Esophagus squamous epithelium (tissue), 5 donors: ENCODE measurements at regions of chr4 and their contacts with region 1.

Region 1: GRCh38 chr4:98995183-98996055 is at the start of gene METAP1:
- DNase-seq: peak; percentile 91
- H3K4me3 ChIP-seq: peak within 1 kb of the TSS; percentile 90 to 98 (median 98)
- H3K27ac ChIP-seq: peak within 1 kb of the TSS; percentile 93 to 99 (median 96)
- H3K4me1 ChIP-seq: peaks cover 6 to 49% (median 15%) of the 10 kb centered on the region in 3 donors
- H3K27me3 ChIP-seq: no peaks in the 10 kb centered on the region
- CTCF ChIP-seq: peak; percentile 52 to 88 (median 82)
- POLR2A ChIP-seq: peak in 2 of 4 donors; percentile 23 to 77
- total RNA-seq, gene METAP1: 48.5 to 81.6 (median 72.1) TPM

Region 2: GRCh38 chr4:98873059-98873458 is 122.4 kb before region 1 on chr4:
- intact Hi-C with region 1: no loop called
- DNase-seq: no peak
- H3K4me3 ChIP-seq: no peak overlapping the region
- H3K27ac ChIP-seq: no peak overlapping the region
- H3K4me1 ChIP-seq: no peaks in the 10 kb centered on the region
- H3K27me3 ChIP-seq: no peaks in the 10 kb centered on the region
- CTCF ChIP-seq: no peak
- POLR2A ChIP-seq: no peak

Region 3: DNA sequence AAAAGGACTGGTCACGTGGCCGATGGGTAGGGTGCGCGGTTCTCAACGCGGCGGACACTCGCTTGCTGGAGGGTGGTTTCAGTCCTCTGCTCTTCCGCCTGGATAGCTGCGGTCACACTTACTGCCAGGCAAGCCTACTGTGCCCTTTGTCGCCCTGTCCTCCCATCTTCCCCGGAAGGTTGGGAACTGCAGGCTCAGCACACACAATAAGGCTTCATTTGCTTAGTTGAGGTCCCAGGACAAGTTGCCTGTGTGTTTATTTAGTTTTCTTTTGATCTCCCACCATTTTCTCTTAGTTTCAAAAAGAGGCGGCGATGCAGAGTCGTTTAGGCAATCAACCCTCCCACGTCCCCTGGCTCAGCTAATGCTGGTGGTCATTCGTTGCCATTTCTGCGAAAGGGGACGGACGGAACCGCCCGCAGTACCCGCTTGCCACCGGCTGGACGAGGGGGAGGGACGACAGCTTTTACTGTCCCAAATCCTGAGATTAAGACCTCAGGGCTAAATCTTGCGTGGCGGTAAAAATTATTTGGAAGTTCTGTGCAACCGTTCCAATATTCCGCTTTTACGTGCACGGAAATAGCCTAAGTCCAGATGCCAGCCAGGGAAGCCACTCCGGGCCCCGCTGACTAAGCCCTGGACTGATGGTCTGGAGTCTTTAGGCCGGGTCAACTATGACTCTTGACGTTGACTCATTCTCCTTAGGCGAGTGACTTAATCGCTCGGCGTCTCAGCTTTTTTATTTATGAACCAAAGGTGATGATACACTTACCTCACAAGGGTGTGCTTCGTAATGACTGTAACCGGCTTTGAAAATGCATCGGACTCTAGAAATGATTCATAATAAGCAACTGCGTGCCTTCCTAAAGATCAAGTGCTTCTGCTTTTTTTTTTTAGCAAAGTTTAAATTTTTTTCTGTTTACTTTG is 65.8 kb before region 1 on chr4:
- intact Hi-C with region 1: loop called (anchors 10 kb)
- DNase-seq: no peak
- H3K4me3 ChIP-seq: peak overlapping the region; percentile 82 to 100 (median 97)
- H3K27ac ChIP-seq: peak overlapping the region; percentile 96 to 100 (median 97)
- H3K4me1 ChIP-seq: peaks cover 15 to 42% (median 18%) of the 10 kb centered on the region in 3 donors
- H3K27me3 ChIP-seq: no peaks in the 10 kb centered on the region
- CTCF ChIP-seq: peak in 3 of 6 experiments; percentile 14 to 54 (median 44)
- POLR2A ChIP-seq: peak in 1 of 4 donors; percentile 16

Region 4: DNA sequence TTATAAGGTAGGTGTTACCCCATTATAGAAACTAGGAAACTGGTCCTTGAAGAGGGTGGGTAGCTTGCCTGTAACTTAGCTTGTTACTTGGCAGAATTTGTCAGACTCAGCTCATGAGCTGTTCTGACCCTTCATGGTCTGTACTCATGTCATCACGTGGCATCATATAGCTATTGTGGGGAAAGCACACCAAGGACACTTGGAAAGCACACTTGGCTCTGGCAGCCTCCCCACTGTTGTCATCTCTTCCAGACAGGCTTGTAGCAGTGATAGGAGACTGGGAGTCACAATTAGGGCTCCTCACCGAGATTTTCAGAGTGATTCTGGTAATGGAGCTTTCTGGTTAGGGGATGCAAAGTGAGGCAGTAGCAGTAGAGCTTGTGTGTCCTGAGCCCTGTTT is 62.8 kb after region 1 on chr4:
- intact Hi-C with region 1: loop called (anchors 5 kb)
- DNase-seq: no peak
- H3K4me3 ChIP-seq: no peak overlapping the region
- H3K27ac ChIP-seq: no peak overlapping the region
- H3K4me1 ChIP-seq: peaks cover 0 to 16% (median 0%) of the 10 kb centered on the region in 3 donors
- H3K27me3 ChIP-seq: no peaks in the 10 kb centered on the region
- CTCF ChIP-seq: no peak
- POLR2A ChIP-seq: no peak

Region 5: DNA sequence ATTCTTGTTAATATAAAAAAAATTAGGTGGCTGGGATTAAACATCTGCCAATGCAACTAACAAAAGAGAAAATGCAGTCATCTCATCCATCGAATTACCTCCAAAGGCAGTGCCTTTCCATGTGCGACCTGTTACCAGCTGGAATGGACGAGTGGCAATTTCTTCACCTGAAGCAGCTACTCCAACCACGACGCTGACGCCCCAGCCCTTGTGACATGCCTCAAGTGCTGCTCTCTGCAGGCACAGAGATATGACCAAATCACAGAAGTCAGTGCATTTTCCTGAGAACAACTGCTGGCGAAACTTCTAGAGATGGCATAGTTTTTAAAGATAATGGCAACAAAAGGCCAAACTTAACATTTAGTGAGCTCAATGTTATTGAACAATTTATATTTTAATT is 79.4 kb after region 1 on chr4:
- intact Hi-C with region 1: no loop called
- DNase-seq: no peak
- H3K4me3 ChIP-seq: no peak overlapping the region
- H3K27ac ChIP-seq: no peak overlapping the region
- H3K4me1 ChIP-seq: no peaks in the 10 kb centered on the region
- H3K27me3 ChIP-seq: no peaks in the 10 kb centered on the region
- CTCF ChIP-seq: no peak
- POLR2A ChIP-seq: no peak

Region 6: GRCh38 chr4:99234331-99235010 is 239.1 kb after region 1 on chr4:
- intact Hi-C with region 1: no loop called
- DNase-seq: no peak
- H3K4me3 ChIP-seq: no peak overlapping the region
- H3K27ac ChIP-seq: no peak overlapping the region
- H3K4me1 ChIP-seq: peaks cover 5 to 33% (median 6%) of the 10 kb centered on the region in 3 donors
- H3K27me3 ChIP-seq: no peaks in the 10 kb centered on the region
- CTCF ChIP-seq: no peak
- POLR2A ChIP-seq: no peak